Heart right ventricle (tissue), 16 donors: ENCODE measurements at regions of chr3 and their contacts with region 1.

Region 1: DNA sequence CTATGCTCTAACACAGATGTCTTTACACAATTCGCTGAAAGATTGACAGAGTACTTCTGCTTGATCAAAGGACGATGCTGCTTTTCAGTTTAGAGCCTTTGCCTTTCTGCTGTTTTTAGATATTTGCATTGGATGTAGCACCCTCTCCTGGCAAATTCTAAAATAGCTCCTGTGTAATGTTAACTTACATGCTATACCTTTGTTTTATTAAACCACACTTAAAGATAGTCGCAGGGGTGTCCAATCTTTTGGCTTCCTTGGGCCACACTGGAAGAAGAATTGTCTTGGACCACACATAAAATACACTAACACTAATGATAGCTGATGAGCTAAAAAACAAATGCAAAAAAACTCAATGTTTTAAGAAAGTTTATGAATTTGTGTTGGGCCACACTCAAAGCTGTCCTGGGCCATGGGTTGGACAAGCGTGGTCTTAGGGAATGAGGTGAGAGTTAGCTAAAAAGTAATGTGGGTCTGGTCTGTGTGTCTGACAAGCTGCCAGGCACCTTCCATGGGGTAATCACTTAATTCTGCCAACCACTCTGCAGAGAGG is 62.9 kb downstream of the ATG7 start:
- DNase-seq: peak in 1 of 2 donors; percentile 26
- ATAC-seq: peak in 7 of 8 donors; percentile 44 to 72 (median 57)
- H3K4me3 ChIP-seq: no peak overlapping the region
- H3K27ac ChIP-seq: no peak overlapping the region
- H3K4me1 ChIP-seq: no peaks in the 10 kb centered on the region
- H3K27me3 ChIP-seq: no peaks in the 10 kb centered on the region
- CTCF ChIP-seq: peak; percentile 17 to 73 (median 68)

Region 2: GRCh38 chr3:10758304-10759061 is 576.6 kb before region 1 on chr3:
- intact Hi-C with region 1: loop called in 2 of 10 experiments (anchors 5 to 10 kb)
- DNase-seq: peak; percentile 22 to 42
- ATAC-seq: peak; percentile 75 to 89 (median 84)
- H3K4me3 ChIP-seq: no peak overlapping the region
- H3K27ac ChIP-seq: no peak overlapping the region
- H3K4me1 ChIP-seq: no peaks in the 10 kb centered on the region
- H3K27me3 ChIP-seq: peaks cover 0 to 76% (median 52%) of the 10 kb centered on the region in 7 donors
- CTCF ChIP-seq: peak; percentile 41 to 76 (median 72)

Region 3: DNA sequence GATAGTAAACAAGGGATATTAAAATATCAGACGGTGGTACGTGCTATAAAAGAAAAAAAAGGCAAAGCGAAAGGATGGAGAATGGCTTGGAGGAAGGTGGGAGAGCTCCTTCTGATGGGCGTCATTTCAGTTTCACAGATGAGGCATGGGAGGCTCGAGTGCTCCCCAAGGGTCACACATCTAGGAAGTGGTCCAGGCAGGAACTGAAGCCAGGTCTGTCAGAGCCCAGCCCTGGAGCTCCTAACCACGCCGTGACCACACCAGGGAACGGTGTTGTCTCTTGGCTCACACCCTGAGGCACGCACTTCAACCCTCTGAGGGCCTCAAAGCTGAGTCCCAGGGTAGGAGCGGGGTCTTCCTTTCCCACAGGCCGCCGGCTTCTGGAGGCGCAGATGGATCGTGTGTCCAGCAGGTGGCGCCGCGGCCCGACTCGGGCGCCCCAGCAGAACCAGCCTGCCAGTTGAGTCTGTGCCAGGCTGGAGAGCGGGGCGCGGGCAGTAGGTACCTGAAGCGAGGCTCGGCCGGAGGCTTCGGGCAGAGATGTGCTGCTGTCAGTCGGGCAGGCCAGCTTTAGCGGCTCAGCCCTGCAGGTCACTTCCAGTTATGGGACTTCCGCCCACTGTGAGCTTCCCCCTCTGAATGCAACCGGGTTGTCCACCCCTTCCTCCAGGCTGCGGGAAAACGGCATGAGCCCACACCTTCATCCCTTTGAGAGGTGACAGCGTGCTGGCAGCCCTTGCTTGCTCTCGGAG is 274.5 kb before region 1 on chr3:
- intact Hi-C with region 1: loop called in 6 of 10 experiments (anchors 1 to 10 kb)
- DNase-seq: peak; percentile 51 to 60
- ATAC-seq: peak; percentile 64 to 85 (median 78)
- H3K4me3 ChIP-seq: peak overlapping the region in 8 of 10 donors; percentile 6 to 47 (median 28)
- H3K27ac ChIP-seq: no peak overlapping the region
- H3K4me1 ChIP-seq: peaks cover 0 to 15% (median 7%) of the 10 kb centered on the region in 9 donors
- H3K27me3 ChIP-seq: peaks cover 0 to 45% (median 21%) of the 10 kb centered on the region in 7 donors
- CTCF ChIP-seq: peak; percentile 70 to 93 (median 89)

Region 4: GRCh38 chr3:11168881-11169805 is 166.0 kb before region 1 on chr3:
- intact Hi-C with region 1: loop called in 3 of 10 experiments (anchors 5 to 10 kb)
- DNase-seq: no peak
- ATAC-seq: peak in 1 of 8 donors; percentile 28
- H3K4me3 ChIP-seq: no peak overlapping the region
- H3K27ac ChIP-seq: no peak overlapping the region
- H3K4me1 ChIP-seq: peaks cover 0 to 18% (median 7%) of the 10 kb centered on the region in 9 donors
- H3K27me3 ChIP-seq: no peaks in the 10 kb centered on the region
- CTCF ChIP-seq: no peak

Region 5: DNA sequence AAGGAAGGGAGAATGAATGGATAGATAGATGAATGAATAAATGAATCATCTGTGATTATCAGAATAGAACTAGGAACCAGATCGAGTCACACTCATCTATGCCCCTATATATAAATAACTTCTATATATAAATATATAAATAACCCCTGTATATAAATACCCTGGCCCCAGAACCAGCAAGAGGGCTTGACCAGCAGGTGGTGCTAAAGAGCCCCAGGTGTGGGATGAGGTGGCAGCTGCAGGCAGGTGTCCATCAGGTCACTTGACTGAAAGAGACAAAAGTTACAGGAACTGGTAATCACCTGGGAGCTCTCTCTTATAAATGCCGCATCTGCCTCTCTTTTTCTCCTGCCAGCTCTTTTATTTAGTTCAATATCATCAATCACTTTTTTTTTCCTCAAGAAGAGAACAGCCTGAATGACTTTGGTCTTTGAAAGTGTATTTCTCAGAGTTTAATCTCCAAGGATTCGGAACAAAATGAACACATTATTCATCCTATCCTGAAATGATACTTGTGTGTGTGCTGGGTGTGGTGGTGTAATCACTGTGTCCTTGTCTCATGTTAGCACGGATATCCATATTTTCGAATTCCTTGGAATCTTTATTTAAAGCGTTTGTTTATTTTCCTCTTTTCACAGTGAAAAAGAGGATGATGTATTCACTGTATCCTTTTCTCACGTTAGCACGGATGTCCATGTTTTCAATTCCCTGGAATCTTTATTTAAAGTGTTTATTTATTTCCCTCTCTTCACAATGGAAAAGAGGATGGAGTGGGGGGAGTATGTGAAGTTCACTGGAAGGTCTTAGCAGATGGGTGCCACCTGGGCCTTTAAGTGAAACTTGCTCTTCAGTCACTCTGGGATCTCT is 98.3 kb before region 1 on chr3:
- intact Hi-C with region 1: loop called in 9 of 10 experiments (anchors 1 to 10 kb)
- DNase-seq: peak; percentile 40 to 53
- ATAC-seq: no peak
- H3K4me3 ChIP-seq: no peak overlapping the region
- H3K27ac ChIP-seq: no peak overlapping the region
- H3K4me1 ChIP-seq: peaks cover 0 to 8% (median 0%) of the 10 kb centered on the region in 9 donors
- H3K27me3 ChIP-seq: peaks cover 0 to 14% (median 4%) of the 10 kb centered on the region in 7 donors
- CTCF ChIP-seq: peak; percentile 61 to 80 (median 77)